Left lung (tissue), 14 donors: ENCODE measurements at regions of chr3 and their contacts with region 1.

Region 1: GRCh38 chr3:56988458-56989168 is 71.9 kb upstream of the SPATA12 start:
- DNase-seq: peak in 3 of 4 donors; percentile 72 to 91 (median 86)
- ATAC-seq: peak; percentile 94
- H3K4me3 ChIP-seq: no peak overlapping the region
- H3K27ac ChIP-seq: no peak overlapping the region
- H3K4me1 ChIP-seq: peaks cover 0 to 13% of the 10 kb centered on the region in 2 donors
- H3K27me3 ChIP-seq: peaks cover 0 to 5% of the 10 kb centered on the region in 2 donors
- CTCF ChIP-seq: peak; percentile 78

Region 2: DNA sequence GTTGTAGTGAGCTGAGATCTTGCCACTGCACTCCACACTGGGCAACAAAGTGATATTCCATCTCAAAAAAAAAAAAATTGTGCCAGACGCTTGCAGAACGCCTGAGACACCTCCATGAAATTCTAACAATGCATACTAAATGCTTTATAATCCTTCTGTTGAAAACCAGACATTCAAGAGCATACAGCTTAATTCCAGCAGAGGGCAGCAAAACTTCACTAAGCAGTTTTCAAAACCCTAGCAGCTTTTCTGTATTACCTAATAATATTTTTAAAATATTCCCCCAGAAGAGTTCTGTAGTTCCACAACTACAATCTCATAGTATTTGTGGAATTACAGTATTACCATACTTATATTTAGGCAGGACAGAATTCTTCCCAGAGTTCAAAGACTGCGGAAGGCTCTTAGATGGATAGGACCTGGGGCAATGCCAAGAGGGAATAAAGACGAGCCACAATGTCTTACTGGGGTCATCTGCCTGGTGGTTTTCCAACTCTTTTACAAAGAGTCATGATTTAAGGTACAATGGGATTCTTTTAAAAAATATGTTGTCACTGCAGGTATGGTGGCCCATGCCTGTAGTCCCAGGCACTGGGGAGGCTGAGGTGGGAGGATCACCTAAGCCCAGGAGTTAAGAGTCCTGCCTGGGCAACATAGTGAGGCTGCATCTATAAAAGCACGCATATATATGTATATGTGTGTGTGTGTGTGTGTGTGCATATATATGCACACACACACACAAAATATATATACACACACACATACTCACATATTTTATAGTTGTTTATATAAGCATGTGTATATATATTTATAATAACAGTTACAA is 285.9 kb before region 1 on chr3:
- intact Hi-C with region 1: loop called (anchors 5 to 10 kb)
- DNase-seq: peak in 2 of 4 donors; percentile 62 to 82
- ATAC-seq: peak; percentile 89
- H3K4me3 ChIP-seq: no peak overlapping the region
- H3K27ac ChIP-seq: no peak overlapping the region
- H3K4me1 ChIP-seq: peaks cover 0 to 7% of the 10 kb centered on the region in 2 donors
- H3K27me3 ChIP-seq: no peaks in the 10 kb centered on the region
- CTCF ChIP-seq: peak; percentile 71 to 84